Aorta (tissue), 5 donors: ENCODE measurements at regions of chr1 and their contacts with region 1.

Region 1: DNA sequence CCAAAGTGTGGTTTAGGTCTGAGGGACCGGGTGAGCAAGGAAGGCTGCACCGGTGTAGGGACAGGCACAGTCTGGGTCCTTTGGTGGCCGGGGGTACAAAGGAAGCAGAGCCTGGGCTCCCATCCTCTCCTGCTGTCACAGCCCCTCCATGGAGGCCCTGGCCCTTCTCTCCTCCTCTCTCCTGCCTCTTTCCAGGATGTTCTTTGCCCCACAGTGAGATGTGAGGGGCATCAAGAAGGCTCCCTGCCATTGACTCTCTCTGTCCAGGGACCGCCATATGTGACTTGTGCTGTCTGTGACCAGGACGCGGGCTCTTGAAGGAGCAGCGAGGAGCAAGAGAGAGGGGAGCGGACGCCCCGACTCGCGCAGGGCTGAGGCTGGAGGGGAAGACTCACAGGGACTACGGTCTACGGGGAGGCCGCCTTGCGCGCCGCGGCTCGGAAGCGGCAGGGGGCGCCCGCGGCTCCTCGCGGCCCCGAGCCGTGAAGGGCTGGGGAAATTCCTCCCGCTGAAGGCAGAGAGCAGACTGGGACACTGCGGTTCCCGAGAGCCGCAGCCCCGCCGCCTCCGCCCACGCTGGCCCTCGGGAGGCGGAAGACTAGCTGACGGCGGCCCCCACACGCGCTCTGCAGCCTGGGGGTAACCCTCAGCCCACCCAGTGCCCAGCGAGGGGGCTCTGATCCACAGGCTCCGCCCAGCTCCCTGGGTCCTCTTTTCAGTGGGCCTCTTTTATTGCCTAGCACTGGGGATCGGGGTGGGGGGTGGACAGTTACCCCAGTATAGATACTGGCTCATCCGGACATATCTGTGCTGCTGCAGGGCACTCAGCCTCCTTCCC is 40.8 kb downstream of the MAB21L3 start:
- DNase-seq: peak; percentile 85 to 90
- ATAC-seq: peak; percentile 96
- H3K4me3 ChIP-seq: peak overlapping the region in 1 of 2 donors; percentile 1
- H3K27ac ChIP-seq: no peak overlapping the region
- H3K4me1 ChIP-seq: no peaks in the 10 kb centered on the region
- H3K27me3 ChIP-seq: no peaks in the 10 kb centered on the region

Region 2: DNA sequence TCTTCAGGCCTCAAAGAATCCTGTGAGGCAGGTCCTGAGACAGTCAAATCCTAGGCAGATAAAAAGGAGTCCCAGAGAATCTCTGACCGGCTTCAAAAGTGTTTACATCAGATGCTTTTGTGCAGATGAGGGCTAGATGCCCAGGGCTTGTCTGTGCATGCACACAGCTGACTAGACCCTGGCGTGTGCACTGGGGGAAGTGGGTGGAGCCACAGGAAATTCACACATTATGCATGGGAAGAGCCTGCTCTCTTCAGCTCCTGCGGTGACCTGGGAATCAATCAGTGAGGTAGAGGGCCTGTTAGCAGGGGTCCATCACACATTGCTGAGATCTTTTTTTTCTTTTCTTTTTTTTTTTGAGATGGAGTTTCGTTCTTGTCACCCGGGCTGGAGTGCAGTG is 274.4 kb before region 1 on chr1:
- intact Hi-C with region 1: no loop called
- DNase-seq: no peak
- ATAC-seq: no peak
- H3K4me3 ChIP-seq: no peak overlapping the region
- H3K27ac ChIP-seq: no peak overlapping the region
- H3K4me1 ChIP-seq: no peaks in the 10 kb centered on the region
- H3K27me3 ChIP-seq: peaks cover 0 to 8% of the 10 kb centered on the region in 2 donors

Region 3: DNA sequence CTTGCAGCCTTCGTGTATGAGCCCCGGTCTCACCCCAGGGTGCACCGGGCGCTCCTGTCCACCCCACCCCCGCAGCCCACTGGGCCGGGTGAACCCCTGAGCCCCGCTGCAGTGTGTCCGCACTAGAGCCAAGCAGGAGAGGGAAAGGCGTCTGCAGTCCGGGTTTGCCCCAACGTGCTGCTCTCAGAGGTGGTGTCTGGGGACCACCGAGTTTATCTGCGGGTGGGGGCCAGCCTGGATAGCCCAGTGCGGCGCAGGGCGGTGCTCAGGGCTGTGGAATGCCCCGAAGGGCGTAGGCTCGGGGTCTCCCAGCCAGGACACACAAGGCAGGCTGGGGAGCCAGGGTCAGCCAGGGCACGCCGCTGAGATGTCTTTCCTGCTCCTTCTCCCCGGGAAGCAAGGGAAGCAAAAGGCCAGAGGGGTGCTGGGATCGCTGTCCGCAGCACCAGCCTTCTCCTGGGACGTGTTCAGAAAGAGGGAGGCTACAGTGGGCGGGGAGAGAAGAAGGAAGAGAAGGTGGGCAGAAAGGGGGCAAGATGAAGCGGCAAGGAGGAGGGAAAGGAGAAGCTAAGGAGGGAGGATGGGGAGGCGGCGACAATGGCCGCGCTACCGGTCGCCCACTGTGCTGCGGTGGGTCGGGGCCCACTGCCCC is 15.8 kb after region 1 on chr1:
- intact Hi-C with region 1: loop called in 1 of 2 experiments (anchors 1 kb)
- DNase-seq: peak in 1 of 2 donors; percentile 50
- ATAC-seq: peak; percentile 33
- H3K4me3 ChIP-seq: peak overlapping the region; percentile 50 to 60
- H3K27ac ChIP-seq: no peak overlapping the region
- H3K4me1 ChIP-seq: no peaks in the 10 kb centered on the region
- H3K27me3 ChIP-seq: no peaks in the 10 kb centered on the region

Region 4: GRCh38 chr1:116185161-116185701 is 33.3 kb after region 1 on chr1:
- intact Hi-C with region 1: no loop called
- DNase-seq: no peak
- ATAC-seq: no peak
- H3K4me3 ChIP-seq: no peak overlapping the region
- H3K27ac ChIP-seq: no peak overlapping the region
- H3K4me1 ChIP-seq: no peaks in the 10 kb centered on the region
- H3K27me3 ChIP-seq: peaks cover 0 to 2% of the 10 kb centered on the region in 2 donors

Region 5: DNA sequence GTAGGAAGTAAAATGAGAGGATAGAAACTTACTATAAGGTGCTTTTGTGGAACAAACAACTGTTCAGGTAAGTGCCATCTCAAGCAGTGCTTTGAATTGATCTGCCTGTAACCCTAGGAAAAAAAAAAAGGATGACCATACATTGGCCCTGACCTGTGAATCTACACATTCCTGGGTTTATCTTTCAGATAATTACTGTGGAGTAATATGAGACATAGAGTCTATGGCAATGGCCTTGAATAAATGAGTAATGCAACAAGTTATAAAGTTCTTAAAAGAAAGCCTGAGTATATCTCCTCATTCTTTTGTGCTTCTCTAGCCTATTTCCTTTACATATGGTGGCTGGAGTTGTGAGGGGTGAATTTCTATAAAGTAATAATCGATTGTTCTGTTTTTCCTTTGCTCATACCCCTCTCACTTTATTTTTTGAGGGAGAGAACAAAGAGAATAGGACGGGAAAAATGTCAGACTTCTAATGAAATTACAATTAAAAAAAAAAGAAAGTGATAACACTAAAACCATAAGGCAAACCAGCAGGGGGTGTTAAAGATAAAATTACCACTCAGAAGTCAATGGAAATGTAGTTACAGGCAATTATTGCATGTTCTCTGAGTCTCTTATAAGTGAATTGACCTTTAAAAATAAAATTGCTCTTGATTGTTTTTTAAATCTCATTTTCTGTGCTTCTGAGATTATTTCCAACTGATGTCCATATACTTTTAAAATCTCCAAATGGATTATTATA is 208.6 kb after region 1 on chr1:
- intact Hi-C with region 1: loop called in 1 of 2 experiments (anchors 5 kb)
- DNase-seq: no peak
- ATAC-seq: no peak
- H3K4me3 ChIP-seq: no peak overlapping the region
- H3K27ac ChIP-seq: no peak overlapping the region
- H3K4me1 ChIP-seq: no peaks in the 10 kb centered on the region
- H3K27me3 ChIP-seq: no peaks in the 10 kb centered on the region